WTC11 (cell line): ENCODE measurements at regions of chr5 and their contacts with region 1.

Region 1: GRCh38 chr5:172707285-172708182 is 63.5 kb downstream of the DUSP1 start:
- DNase-seq: peak; percentile 61
- ATAC-seq: peak; percentile 88
- H3K4me3 Mint-ChIP-seq: peak overlapping the region; percentile 18; the same call in 1 of the 2 replicates
- H3K27ac Mint-ChIP-seq: no peak overlapping the region
- H3K4me1 Mint-ChIP-seq: peaks cover 13% of the 10 kb centered on the region
- H3K27me3 Mint-ChIP-seq: peaks cover 36% of the 10 kb centered on the region
- CTCF ChIP-seq: no peak

Region 2: DNA sequence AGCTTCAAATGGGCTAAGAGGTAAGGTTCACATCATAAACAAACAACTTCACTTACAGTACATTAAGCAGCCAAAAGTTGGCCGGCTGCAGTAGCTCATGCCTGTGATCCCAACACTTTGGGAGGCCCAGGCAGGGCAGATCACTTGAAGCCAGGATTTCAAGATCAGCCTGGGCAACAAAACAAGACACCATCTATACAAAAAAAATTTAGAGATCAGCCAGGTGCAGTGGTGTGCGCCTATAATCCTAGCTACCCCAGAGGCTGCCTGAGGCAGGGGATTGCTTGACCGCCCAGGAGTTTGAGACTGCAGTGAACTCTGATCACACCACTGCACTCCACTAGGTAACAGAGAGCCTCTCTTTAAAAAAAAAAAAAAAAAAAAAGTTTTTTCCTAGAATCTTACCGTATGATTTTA is 440.9 kb before region 1 on chr5:
- CTCF ChIA-PET with region 1: no interaction called
- POLR2A ChIA-PET with region 1: no interaction called
- DNase-seq: no peak
- ATAC-seq: no peak
- H3K4me3 Mint-ChIP-seq: no peak overlapping the region
- H3K27ac Mint-ChIP-seq: peak overlapping the region; percentile 85
- H3K4me1 Mint-ChIP-seq: peaks cover 24% of the 10 kb centered on the region
- H3K27me3 Mint-ChIP-seq: no peaks in the 10 kb centered on the region
- CTCF ChIP-seq: no peak

Region 3: GRCh38 chr5:172511952-172512351 is 195.6 kb before region 1 on chr5:
- CTCF ChIA-PET with region 1: no interaction called
- POLR2A ChIA-PET with region 1: no interaction called
- DNase-seq: no peak
- ATAC-seq: no peak
- H3K4me3 Mint-ChIP-seq: no peak overlapping the region
- H3K27ac Mint-ChIP-seq: no peak overlapping the region
- H3K4me1 Mint-ChIP-seq: peaks cover 6% of the 10 kb centered on the region; the same call in 1 of the 2 replicates
- H3K27me3 Mint-ChIP-seq: peaks cover 35% of the 10 kb centered on the region
- CTCF ChIP-seq: no peak

Region 4: DNA sequence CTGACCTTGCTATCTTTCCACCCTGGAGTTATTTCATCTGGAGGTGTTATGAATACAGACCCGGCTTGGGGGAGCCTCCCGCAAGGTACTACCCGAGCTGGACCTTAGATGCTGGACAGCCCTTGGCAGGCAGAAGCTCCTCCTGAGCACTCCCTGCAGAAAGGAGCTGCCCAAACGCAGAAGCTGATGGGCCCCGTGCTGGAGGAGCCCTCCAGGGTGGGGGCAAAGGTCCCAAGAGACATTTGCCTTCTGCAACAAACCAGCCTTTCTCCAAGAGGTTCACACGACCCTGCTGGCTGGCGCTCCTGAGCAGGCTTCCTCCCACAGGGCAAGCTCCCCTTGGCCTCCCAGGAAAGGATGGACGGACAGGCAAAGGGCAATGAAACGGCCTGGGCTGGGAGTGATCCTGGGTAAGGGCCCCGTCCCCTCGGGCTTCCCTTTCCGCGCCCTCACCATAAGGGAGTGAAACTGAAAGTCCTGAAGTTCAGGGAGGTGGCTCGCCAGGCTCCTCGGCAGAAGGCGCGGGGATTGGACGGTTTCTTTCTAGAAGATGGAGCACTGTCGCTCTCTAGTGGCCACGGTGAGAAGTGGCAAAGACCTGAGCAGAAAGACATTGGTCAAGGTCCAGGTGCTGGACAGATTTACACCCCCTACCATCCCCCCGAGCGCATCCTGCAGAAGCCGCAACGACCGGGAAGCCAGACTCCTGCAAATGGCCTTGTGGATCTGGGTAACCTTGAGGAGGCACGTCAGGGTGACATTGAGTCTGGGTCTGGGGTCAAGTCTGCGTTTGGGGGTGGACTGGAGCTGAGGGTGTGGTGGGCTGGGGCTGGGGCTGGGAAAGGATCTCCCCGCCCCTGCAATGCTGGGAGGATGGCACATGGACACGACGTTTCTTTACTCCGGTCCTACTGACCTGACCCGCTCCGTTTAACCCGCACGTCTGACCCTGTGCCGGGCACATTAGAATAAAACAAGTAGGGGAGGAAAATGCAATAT is 10.1 kb before region 1 on chr5:
- CTCF ChIA-PET with region 1: interaction called, 12 read pairs
- POLR2A ChIA-PET with region 1: interaction called, 3 read pairs
- DNase-seq: peak; percentile 89
- ATAC-seq: peak; percentile 60
- H3K4me3 Mint-ChIP-seq: peak overlapping the region; percentile 66
- H3K27ac Mint-ChIP-seq: no peak overlapping the region
- H3K4me1 Mint-ChIP-seq: peaks cover 47% of the 10 kb centered on the region
- H3K27me3 Mint-ChIP-seq: peaks cover 32% of the 10 kb centered on the region
- CTCF ChIP-seq: peak; percentile 85

Region 5: DNA sequence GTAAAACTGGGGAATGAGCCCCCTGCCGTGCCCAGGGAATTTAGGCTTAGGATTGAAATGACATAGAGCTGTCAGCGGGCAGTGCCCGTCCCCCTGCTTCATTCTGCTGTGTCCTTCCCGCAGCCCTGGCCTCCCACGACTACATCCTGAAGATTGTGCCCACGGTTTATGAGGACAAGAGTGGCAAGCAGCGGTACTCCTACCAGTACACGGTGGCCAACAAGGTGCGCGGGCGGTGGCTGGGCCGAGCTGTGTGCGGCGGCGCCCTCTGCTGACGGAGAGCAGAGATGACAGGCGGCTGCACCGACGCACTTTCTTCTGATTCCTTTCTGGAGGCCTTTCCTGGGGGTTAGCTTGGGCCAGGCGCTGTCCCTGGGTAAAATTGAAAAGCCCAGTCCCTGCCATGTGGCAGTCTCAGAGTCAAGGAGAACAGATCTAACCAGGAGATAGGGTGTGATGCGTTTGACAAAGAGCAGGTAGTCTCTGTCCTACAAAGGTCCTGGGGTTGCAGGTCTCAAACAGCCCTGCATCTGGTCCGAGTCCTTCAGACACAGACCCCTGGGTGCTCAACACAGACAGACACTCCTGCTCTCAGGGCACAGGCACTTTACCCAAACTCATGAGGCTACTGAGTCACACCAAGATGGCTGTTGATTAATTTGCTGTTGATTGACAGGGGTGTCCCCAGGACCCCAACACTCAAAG is 224.9 kb after region 1 on chr5:
- CTCF ChIA-PET with region 1: interaction called, 50 read pairs
- POLR2A ChIA-PET with region 1: no interaction called
- DNase-seq: peak; percentile 66
- ATAC-seq: peak; percentile 92
- H3K4me3 Mint-ChIP-seq: no peak overlapping the region
- H3K27ac Mint-ChIP-seq: no peak overlapping the region
- H3K4me1 Mint-ChIP-seq: no peaks in the 10 kb centered on the region
- H3K27me3 Mint-ChIP-seq: no peaks in the 10 kb centered on the region
- CTCF ChIP-seq: peak; percentile 90

Region 6: DNA sequence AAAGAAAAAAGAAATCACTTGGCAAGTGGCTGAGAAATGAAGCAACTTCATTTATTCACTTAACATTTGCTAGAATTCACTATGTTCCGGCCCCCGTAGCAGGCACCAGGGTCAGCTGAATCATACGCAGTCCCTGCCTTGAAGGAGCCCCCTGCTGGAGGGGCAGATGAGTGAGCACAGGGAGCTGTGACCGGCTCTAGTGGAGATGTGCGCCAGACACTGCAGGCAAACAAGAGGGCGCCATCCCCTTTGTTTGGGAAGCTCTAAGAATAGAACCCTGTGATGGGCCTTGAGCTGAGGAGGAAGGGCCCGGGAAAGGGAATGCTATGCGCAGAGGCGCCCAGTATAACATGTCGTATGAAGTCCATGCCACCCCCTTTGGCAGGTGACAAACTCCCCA is 231.5 kb after region 1 on chr5:
- CTCF ChIA-PET with region 1: interaction called, 50 read pairs
- POLR2A ChIA-PET with region 1: no interaction called
- DNase-seq: peak; percentile 74
- ATAC-seq: peak; percentile 82
- H3K4me3 Mint-ChIP-seq: no peak overlapping the region
- H3K27ac Mint-ChIP-seq: no peak overlapping the region
- H3K4me1 Mint-ChIP-seq: peaks cover 15% of the 10 kb centered on the region
- H3K27me3 Mint-ChIP-seq: no peaks in the 10 kb centered on the region
- CTCF ChIP-seq: peak; percentile 46

Region 7: GRCh38 chr5:172958331-172959046 is 251.0 kb after region 1 on chr5:
- CTCF ChIA-PET with region 1: interaction called, 10 read pairs
- POLR2A ChIA-PET with region 1: interaction called, 3 read pairs
- DNase-seq: peak; percentile 63
- ATAC-seq: peak; percentile 83
- H3K4me3 Mint-ChIP-seq: peak overlapping the region; percentile 89
- H3K27ac Mint-ChIP-seq: no peak overlapping the region
- H3K4me1 Mint-ChIP-seq: peaks cover 9% of the 10 kb centered on the region
- H3K27me3 Mint-ChIP-seq: peaks cover 42% of the 10 kb centered on the region
- CTCF ChIP-seq: no peak